IMR-90 (cell line): ENCODE measurements at regions of chr15 and their contacts with region 1.

Region 1: GRCh38 chr15:63372753-63373152 is 8.9 kb downstream of the CA12 start:
- DNase-seq: peak; percentile 37
- ATAC-seq: peak; percentile 1
- H3K4me3 ChIP-seq: no peak overlapping the region
- H3K27ac ChIP-seq: peak overlapping the region; percentile 82
- H3K4me1 ChIP-seq: peaks cover 36% of the 10 kb centered on the region
- H3K27me3 ChIP-seq: no peaks in the 10 kb centered on the region
- CTCF ChIP-seq: no peak
- POLR2A ChIP-seq: no peak
- RAD21 ChIP-seq: no peak

Region 2: GRCh38 chr15:63420333-63420747 is 47.6 kb after region 1 on chr15:
- CTCF ChIA-PET with region 1: no interaction called
- POLR2A ChIA-PET with region 1: interaction called, 15 read pairs
- dilution Hi-C with region 1: no loop called
- in situ Hi-C with region 1: no loop called
- intact Hi-C with region 1: no loop called
- DNase-seq: peak; percentile 43
- ATAC-seq: peak; percentile 49
- H3K4me3 ChIP-seq: no peak overlapping the region
- H3K27ac ChIP-seq: no peak overlapping the region
- H3K4me1 ChIP-seq: peaks cover 2% of the 10 kb centered on the region; the same call in 1 of the 2 replicates
- H3K27me3 ChIP-seq: no peaks in the 10 kb centered on the region
- CTCF ChIP-seq: no peak
- POLR2A ChIP-seq: no peak
- RAD21 ChIP-seq: no peak